ENCODE measurements at regions of chr14 and their contacts with region 1.

Region 1: DNA sequence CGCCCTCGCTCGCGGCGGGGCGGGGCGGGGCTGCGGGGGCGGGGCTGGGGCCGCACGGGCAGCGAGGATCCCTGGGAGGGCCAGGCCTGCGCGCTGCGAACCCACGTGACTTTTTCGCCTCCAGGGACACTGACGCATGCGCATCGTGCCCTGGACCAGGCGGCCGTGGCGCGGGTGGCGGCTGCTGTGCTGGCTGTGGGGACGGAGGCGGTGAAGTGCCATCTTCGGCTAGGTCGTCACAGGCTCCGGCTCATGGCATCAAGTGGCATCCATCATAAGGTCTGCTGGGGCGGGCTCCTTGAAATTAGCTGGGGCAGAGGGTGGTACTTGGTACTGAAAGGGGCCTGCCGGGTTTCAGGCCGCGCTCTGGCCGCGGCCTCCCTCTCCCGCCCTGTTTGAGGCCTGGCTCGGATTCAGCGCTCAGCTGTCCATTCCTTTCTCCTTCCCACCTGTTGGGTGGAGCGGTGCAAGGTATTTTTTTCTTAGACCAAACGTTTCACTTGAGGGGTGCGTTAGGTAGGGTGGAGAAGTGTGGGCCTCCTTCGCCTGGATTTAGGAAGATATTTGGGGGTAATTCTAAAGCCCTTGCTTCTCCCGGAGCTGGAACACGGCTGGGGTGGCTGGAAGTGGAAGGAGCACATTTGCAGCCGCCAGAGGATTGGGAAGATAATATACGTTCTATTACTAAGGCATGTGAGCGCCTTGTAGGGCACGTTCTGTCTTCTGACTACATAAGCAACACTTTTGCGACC is at the start of gene PRPF39:
- DNase-seq: peak; percentile 92 to 93 (median 92)
- H3K4me3 ChIP-seq: peak within 1 kb of the TSS; percentile 78 to 94 (median 83)
- H3K4me3 Mint-ChIP-seq: peak within 1 kb of the TSS; percentile 87 to 94
- H3K27ac ChIP-seq: peak within 1 kb of the TSS; percentile 68 to 82
- H3K27ac Mint-ChIP-seq: peak within 1 kb of the TSS; percentile 82 to 95 (median 92)
- H3K4me1 ChIP-seq: peaks cover 20 to 27% of the 10 kb centered on the region in 2 donors
- H3K4me1 Mint-ChIP-seq: peaks cover 41% of the 10 kb centered on the region
- H3K27me3 ChIP-seq: no peaks in the 10 kb centered on the region
- H3K27me3 Mint-ChIP-seq: peaks cover 2 to 7% (median 6%) of the 10 kb centered on the region in 3 donors
- CTCF ChIP-seq: no peak
- polyA plus RNA-seq, gene PRPF39: 3.3 to 26.1 (median 5.4) TPM

Region 2: DNA sequence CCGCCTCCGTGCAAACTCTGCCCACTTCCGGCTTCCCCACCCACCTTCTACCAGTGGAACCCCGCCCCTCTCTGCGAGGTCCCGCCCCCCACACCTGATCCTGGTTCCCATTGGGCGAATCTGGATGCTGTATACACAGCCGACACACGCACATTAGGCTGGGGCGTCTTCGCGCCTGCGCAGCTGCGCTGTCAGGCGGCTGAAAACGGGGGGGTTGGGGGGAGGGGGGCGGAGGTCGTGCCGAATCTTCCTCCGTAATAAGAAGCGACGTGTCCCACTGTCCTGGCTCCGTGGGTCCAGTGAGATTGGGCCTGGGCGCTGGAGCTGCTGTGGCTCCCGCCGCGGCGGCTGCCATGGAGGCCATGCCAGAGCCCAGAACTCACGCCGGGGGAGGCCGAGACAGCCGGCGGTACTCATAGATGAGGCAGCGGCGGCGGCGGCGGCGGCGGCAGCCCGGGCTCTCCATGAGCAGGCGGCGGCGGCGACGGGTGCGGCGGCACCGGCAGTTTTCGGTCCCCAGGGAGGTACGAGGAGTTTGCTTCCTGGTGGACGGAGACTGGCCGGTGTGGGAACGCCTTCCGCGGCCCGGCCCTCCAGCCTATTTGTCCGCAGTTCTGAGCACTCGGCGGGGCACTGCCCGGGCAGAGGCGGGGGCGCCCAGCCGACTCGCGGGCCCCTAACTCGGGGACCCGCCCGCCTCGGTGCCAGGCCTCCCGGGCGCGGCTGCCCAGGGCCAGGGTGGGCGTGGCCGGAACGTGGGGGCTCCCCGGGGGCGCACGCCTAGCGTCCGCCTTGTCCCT is 186.9 kb before region 1 on chr14:
- intact Hi-C with region 1: loop called in 1 of 2 experiments (anchors 10 kb)
- DNase-seq: peak; percentile 95 to 96 (median 96)
- H3K4me3 ChIP-seq: peak overlapping the region; percentile 75 to 83 (median 82)
- H3K4me3 Mint-ChIP-seq: peak overlapping the region; percentile 86 to 92
- H3K27ac ChIP-seq: peak overlapping the region; percentile 79 to 84
- H3K27ac Mint-ChIP-seq: peak overlapping the region; percentile 87 to 96 (median 95)
- H3K4me1 ChIP-seq: peaks cover 6 to 8% of the 10 kb centered on the region in 2 donors
- H3K4me1 Mint-ChIP-seq: peaks cover 12% of the 10 kb centered on the region
- H3K27me3 ChIP-seq: no peaks in the 10 kb centered on the region
- H3K27me3 Mint-ChIP-seq: peaks cover 0 to 5% (median 0%) of the 10 kb centered on the region in 3 donors
- CTCF ChIP-seq: no peak

Region 3: GRCh38 chr14:44989497-44990440 is 94.4 kb before region 1 on chr14:
- intact Hi-C with region 1: no loop called
- DNase-seq: peak in 2 of 3 donors; percentile 18 to 54
- H3K4me3 ChIP-seq: no peak overlapping the region
- H3K4me3 Mint-ChIP-seq: no peak overlapping the region
- H3K27ac ChIP-seq: no peak overlapping the region
- H3K27ac Mint-ChIP-seq: peak overlapping the region in 3 of 7 donors; percentile 27 to 47 (median 34)
- H3K4me1 ChIP-seq: peaks cover 0 to 9% of the 10 kb centered on the region in 2 donors
- H3K4me1 Mint-ChIP-seq: peaks cover 14% of the 10 kb centered on the region
- H3K27me3 ChIP-seq: no peaks in the 10 kb centered on the region
- H3K27me3 Mint-ChIP-seq: no peaks in the 10 kb centered on the region
- CTCF ChIP-seq: no peak

Region 4: DNA sequence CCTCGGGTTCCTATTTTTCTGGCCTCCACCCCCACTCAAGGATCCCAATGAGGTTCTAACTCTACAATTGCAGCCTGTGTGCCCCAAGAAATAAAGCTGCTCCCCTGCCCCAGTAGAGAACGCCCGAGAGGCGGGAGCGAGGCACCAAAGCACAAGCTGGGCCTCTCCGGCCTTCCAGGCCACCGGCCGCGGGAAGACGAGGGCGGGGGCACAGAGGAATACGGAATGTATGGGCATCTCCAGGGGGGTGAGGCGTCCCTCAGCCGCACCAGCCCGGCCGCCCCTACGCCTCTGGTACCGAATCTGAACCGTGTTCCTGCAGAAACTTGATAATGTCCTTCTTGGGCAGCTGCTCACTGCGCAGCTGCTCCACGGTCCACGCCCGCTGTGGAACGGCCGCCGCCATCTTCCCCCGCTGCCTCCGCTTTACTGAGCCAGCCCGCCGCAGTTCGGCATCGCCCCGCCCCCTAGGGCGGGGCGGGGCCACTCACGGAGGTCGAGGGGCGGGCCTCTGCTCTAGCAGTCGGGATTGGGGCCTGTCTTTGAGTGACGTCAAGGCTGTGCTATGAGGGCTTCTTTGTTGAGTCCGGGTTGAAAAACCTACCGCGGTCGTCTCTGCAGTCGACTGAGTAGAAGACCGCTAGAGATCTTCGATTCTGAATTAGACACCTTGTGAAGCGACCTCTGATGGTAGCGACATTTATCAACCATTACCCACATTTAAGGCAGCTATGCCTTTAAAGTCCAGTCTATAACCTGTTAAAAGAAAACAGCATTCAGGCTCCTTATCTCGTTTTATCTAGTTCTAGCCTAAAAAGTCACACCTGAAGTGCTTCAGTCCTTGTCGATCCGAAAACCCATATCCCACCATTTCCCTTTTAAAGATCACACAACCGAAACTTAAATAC is 50.2 kb after region 1 on chr14 and contains the start of gene FKBP3:
- intact Hi-C with region 1: loop called (anchors 5 kb)
- DNase-seq: peak; percentile 96 to 98 (median 97)
- H3K4me3 ChIP-seq: peak within 1 kb of the TSS; percentile 59 to 99 (median 91)
- H3K4me3 Mint-ChIP-seq: peak within 1 kb of the TSS; percentile 98 to 99
- H3K27ac ChIP-seq: peak within 1 kb of the TSS; percentile 73 to 87
- H3K27ac Mint-ChIP-seq: peak within 1 kb of the TSS; percentile 95 to 98 (median 97)
- H3K4me1 ChIP-seq: peaks cover 19 to 28% of the 10 kb centered on the region in 2 donors
- H3K4me1 Mint-ChIP-seq: peaks cover 30% of the 10 kb centered on the region
- H3K27me3 ChIP-seq: no peaks in the 10 kb centered on the region
- H3K27me3 Mint-ChIP-seq: no peaks in the 10 kb centered on the region
- CTCF ChIP-seq: no peak
- polyA plus RNA-seq, gene FKBP3: 18.1 to 50.3 (median 42.5) TPM

Region 5: DNA sequence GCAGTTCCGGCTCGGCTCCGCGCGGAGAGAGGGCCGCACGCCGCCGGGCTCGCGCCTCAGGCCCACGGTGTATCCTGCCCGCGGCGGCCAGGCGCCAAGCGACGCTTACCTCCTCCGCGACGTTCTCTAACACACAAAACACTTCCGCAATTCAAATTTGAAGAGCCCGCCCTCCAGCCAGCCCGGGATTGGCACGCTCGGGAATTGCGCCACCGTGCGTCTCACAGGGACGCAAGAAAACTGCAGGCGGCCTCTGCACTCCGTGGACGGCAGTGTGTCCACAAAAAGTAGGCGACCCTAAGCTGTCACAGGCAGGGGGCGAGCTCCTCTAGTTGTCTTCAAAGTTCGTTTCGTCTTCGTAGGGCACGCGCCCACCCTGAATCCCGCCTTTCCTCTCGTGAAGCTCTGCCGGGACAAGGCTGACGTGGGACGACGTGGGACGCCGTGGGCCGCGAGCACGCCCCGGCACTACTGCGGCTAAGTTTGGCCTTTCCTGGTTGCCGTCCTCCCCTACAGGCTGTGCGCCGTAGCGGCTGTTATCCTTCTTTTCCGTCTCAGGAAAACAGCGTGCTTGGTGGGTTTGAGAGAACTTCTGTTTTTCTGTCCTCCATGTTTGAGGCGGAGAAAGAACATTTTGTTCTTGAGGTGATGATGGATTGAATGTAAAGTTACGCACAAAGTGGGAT is 169.1 kb after region 1 on chr14 and contains the start of gene MIS18BP1:
- intact Hi-C with region 1: loop called in 1 of 2 experiments (anchors 5 kb)
- DNase-seq: peak; percentile 94 to 96 (median 95)
- H3K4me3 ChIP-seq: peak within 1 kb of the TSS; percentile 94 to 98 (median 95)
- H3K4me3 Mint-ChIP-seq: peak within 1 kb of the TSS; percentile 90 to 93
- H3K27ac ChIP-seq: peak within 1 kb of the TSS; percentile 83 to 93
- H3K27ac Mint-ChIP-seq: peak within 1 kb of the TSS; percentile 92 to 98 (median 96)
- H3K4me1 ChIP-seq: peaks cover 49 to 61% of the 10 kb centered on the region in 2 donors
- H3K4me1 Mint-ChIP-seq: peaks cover 44% of the 10 kb centered on the region
- H3K27me3 ChIP-seq: no peaks in the 10 kb centered on the region
- H3K27me3 Mint-ChIP-seq: peaks cover 0 to 1% (median 0%) of the 10 kb centered on the region in 3 donors
- CTCF ChIP-seq: peak; percentile 61
- polyA plus RNA-seq, gene MIS18BP1: 39.2 to 61.8 (median 45.6) TPM

Measured in CD14-positive monocyte (primary cell).